Ovary (tissue), 10 donors: ENCODE measurements at regions of chr20 and their contacts with region 1.

Region 1: GRCh38 chr20:60642541-60642940 is 609.5 kb upstream of the CDH4 start:
- DNase-seq: no peak
- H3K4me3 ChIP-seq: no peak overlapping the region
- H3K27ac ChIP-seq: no peak overlapping the region
- H3K4me1 ChIP-seq: peaks cover 1% of the 10 kb centered on the region
- H3K27me3 ChIP-seq: no peaks in the 10 kb centered on the region
- CTCF ChIP-seq: no peak
- EP300 ChIP-seq: no peak
- POLR2A ChIP-seq: no peak

Region 2: DNA sequence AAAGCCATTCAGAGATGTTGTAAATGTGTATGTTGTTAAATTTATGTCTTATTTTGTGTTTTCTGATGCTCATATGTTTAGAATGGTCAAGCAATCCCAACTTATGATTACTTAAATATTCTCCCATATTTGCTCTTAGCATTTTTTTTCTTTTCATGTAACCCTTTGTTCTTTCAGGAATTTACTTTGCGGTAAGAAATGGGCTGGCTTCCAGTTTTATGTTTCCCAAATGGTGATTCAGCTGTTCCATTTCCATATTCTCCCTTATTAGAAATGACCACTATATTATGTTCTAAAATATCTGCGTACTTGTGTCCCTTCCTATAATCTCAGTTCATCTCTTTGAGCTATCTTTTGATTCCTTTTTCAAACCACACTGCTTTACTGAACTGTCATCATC is 570.6 kb before region 1 on chr20:
- intact Hi-C with region 1: loop called in 1 of 4 experiments (anchors 5 kb)
- DNase-seq: no peak
- H3K4me3 ChIP-seq: no peak overlapping the region
- H3K27ac ChIP-seq: no peak overlapping the region
- H3K4me1 ChIP-seq: no peaks in the 10 kb centered on the region
- H3K27me3 ChIP-seq: no peaks in the 10 kb centered on the region
- CTCF ChIP-seq: no peak
- EP300 ChIP-seq: no peak
- POLR2A ChIP-seq: no peak